Pancreas (tissue), 10 donors: ENCODE measurements at regions of chr4 and their contacts with region 1.

Region 1: GRCh38 chr4:142126890-142127497 is 490.6 kb downstream of the IL15 start:
- DNase-seq: peak in 3 of 6 donors; percentile 24 to 59 (median 39)
- ATAC-seq: peak; percentile 69 to 86 (median 82)
- H3K4me3 ChIP-seq: no peak overlapping the region
- H3K27ac ChIP-seq: no peak overlapping the region
- H3K4me1 ChIP-seq: peaks cover 0 to 14% (median 8%) of the 10 kb centered on the region in 3 donors
- H3K27me3 ChIP-seq: no peaks in the 10 kb centered on the region
- CTCF ChIP-seq: peak; percentile 49 to 80 (median 63)

Region 2: DNA sequence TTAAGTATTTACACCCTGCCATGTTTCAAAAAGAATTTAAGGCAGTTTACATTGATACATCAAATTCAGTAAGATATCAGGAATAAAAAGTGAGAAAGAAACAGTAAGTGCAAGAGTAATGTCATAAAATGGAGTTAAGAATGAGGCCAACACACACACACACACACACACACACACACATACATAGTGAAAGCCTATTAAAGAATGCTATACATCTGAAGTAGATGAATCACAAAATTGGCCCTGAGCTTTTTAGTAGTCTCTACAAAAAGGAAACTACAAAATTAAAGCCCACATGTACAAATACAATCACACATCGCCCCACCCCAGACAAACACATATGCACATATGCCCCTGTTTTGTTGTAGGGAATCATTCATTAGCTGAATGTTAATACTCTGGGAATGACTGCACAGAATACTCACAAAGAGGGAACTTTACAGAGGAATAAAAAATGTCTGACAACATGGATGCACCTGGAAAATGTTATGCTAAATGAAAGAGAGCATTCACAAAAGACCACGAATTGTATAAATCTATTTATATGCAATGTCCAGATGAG is 61.8 kb before region 1 on chr4:
- intact Hi-C with region 1: no loop called
- DNase-seq: no peak
- ATAC-seq: no peak
- H3K4me3 ChIP-seq: no peak overlapping the region
- H3K27ac ChIP-seq: no peak overlapping the region
- H3K4me1 ChIP-seq: no peaks in the 10 kb centered on the region
- H3K27me3 ChIP-seq: no peaks in the 10 kb centered on the region
- CTCF ChIP-seq: no peak

Region 3: DNA sequence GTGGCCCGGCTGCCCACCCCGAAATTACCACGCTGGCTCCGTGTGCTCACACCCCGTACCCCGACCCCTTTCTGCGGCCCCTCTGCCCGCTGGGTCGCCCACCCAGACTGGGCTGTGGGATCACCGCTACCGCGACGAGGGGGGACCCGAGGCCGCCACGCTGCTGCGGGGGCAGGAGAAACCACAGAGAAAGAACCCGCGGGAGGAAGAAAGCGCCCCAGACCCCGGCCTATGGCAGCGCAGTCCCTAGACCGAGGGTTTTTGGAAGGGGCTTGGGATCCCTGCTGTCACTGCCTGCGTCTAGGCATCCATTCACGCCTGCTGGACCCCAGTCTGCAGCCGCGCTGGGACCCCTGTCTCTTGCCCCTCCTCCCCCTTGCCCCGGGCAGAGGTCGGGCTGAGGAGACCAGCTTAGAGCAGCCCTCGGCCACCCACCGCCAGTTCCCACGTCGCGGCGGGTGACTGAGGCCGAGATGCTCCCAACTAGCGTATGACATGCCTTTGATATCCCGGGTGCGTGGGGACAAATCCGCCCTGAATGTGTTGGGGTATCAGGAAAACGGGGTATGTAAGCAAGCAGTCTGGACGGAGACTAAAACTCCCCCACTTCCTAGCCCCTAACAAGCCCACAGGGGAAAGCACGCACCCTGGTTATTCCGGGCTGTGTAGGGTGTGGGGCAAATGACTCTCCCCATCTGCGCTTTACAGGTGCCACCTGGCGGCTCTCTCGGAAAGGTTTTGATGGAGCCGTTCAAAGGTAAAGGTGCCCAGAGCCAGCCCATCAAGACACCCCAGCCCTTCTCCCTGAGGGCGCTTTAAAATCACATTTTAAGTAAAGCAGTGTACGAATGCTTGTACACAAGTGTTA is 720.0 kb after region 1 on chr4:
- intact Hi-C with region 1: loop called in 2 of 3 experiments (anchors 10 kb)
- DNase-seq: peak; percentile 48 to 74 (median 61)
- ATAC-seq: peak; percentile 84 to 92 (median 90)
- H3K4me3 ChIP-seq: peak overlapping the region; percentile 33 to 65 (median 46)
- H3K27ac ChIP-seq: peak overlapping the region in 2 of 4 donors; percentile 46 to 53
- H3K4me1 ChIP-seq: no peaks in the 10 kb centered on the region
- H3K27me3 ChIP-seq: peaks cover 0 to 3% (median 0%) of the 10 kb centered on the region in 4 donors
- CTCF ChIP-seq: peak in 2 of 4 donors; percentile 27 to 42